Activated CD4-positive, alpha-beta memory T cell treated with anti-CD3 and anti-CD28 coated beads for 36 hours (primary cell): ENCODE measurements at regions of chrX and their contacts with region 1.

Region 1: GRCh38 chrX:8743126-8743732 is 11.3 kb upstream of the ANOS1 start:
- DNase-seq: peak; percentile 61
- H3K4me3 Mint-ChIP-seq: no peak overlapping the region
- H3K27ac Mint-ChIP-seq: no peak overlapping the region
- H3K4me1 Mint-ChIP-seq: no peaks in the 10 kb centered on the region
- H3K27me3 Mint-ChIP-seq: peaks cover 1% of the 10 kb centered on the region

Region 2: DNA sequence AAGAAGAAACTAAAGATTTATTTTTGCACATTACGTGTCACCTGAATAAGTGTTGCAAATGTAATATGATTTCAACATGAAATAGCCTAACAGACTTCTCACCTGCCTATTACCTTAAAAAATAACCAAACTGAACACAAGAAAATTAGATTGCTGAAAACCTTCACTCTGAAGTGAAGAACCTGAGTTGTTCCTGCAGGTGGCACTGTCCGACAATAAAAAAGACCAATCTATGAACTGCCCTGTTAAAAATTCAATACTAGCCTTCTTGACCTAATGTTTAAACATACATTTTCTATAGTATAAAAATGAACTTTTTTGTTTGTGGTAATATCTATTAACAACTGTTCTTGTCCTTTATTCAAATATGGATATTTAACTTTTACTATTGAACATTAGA is 746.8 kb before region 1 on chrX:
- CTCF ChIA-PET with region 1: interaction called, 4 read pairs
- POLR2A ChIA-PET with region 1: no interaction called
- intact Hi-C with region 1: loop called (anchors 1 kb)
- DNase-seq: peak; percentile 18
- H3K4me3 Mint-ChIP-seq: no peak overlapping the region
- H3K27ac Mint-ChIP-seq: no peak overlapping the region
- H3K4me1 Mint-ChIP-seq: no peaks in the 10 kb centered on the region
- H3K27me3 Mint-ChIP-seq: no peaks in the 10 kb centered on the region

Region 3: GRCh38 chrX:8803326-8803725 is 60.1 kb after region 1 on chrX:
- CTCF ChIA-PET with region 1: no interaction called
- POLR2A ChIA-PET with region 1: no interaction called
- intact Hi-C with region 1: no loop called
- DNase-seq: no peak
- H3K4me3 Mint-ChIP-seq: no peak overlapping the region
- H3K27ac Mint-ChIP-seq: no peak overlapping the region
- H3K4me1 Mint-ChIP-seq: no peaks in the 10 kb centered on the region
- H3K27me3 Mint-ChIP-seq: peaks cover 1% of the 10 kb centered on the region

Region 4: GRCh38 chrX:8864161-8864560 is 120.9 kb after region 1 on chrX:
- CTCF ChIA-PET with region 1: no interaction called
- POLR2A ChIA-PET with region 1: no interaction called
- intact Hi-C with region 1: no loop called
- DNase-seq: no peak
- H3K4me3 Mint-ChIP-seq: no peak overlapping the region
- H3K27ac Mint-ChIP-seq: no peak overlapping the region
- H3K4me1 Mint-ChIP-seq: no peaks in the 10 kb centered on the region
- H3K27me3 Mint-ChIP-seq: peaks cover 6% of the 10 kb centered on the region